Left colon (tissue), 2 donors: ENCODE measurements at regions of chr6 and their contacts with region 1.

Region 1: DNA sequence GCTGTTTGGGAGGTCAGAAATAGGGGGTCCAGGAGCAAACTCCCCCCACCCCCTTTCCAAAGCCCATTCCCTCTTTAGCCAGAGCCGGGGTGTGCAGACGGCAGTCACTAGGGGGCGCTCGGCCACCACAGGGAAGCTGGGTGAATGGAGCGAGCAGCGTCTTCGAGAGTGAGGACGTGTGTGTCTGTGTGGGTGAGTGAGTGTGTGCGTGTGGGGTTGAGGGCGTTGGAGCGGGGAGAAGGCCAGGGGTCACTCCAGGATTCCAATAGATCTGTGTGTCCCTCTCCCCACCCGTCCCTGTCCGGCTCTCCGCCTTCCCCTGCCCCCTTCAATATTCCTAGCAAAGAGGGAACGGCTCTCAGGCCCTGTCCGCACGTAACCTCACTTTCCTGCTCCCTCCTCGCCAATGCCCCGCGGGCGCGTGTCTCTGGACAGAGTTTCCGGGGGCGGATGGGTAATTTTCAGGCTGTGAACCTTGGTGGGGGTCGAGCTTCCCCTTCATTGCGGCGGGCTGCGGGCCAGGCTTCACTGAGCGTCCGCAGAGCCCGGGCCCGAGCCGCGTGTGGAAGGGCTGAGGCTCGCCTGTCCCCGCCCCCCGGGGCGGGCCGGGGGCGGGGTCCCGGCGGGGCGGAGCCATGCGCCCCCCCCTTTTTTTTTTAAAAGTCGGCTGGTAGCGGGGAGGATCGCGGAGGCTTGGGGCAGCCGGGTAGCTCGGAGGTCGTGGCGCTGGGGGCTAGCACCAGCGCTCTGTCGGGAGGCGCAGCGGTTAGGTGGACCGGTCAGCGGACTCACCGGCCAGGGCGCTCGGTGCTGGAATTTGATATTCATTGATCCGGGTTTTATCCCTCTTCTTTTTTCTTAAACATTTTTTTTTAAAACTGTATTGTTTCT is at the start of gene VEGFA:
- DNase-seq: peak; percentile 85 to 95
- ATAC-seq: peak; percentile 58
- total RNA-seq, gene VEGFA: 107 to 110 TPM

Region 2: DNA sequence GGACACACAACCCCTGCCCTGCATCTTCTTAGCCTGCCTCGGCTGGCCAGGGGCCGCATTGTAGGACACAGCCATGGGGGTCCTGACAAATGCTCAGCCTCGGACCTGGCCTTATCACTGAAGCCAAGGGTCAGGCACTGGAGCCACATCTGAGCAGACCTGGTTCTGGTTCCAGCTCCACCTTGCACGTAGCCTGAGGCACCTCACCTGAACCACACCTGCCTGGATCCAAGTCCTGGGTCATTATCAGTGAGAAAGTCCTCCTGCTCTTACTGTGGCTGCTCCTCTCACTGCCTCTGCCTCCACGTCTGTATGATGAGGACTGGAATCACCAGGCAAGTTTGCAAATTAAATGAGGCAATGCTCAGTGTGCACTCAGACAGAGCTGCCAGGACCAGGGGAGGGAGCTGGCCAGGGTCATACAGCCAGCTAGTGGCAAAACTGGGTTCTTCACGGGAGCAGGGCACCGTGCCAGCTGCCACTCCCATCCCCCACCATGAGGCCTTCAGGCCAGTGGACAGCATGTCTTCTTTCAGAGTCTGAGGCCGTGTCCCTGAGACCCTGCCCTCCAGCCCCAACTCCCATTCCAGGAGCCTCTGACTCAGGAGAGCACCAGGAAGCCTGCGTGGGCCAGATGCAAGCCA is 317.3 kb after region 1 on chr6:
- intact Hi-C with region 1: loop called in 1 of 2 experiments (anchors 10 kb)
- DNase-seq: peak in 1 of 2 donors; percentile 54
- ATAC-seq: peak; percentile 58